ENCODE measurements at regions of chr20 and their contacts with region 1.

Region 1: GRCh38 chr20:61099806-61100205 is 152.3 kb upstream of the CDH4 start:
- DNase-seq: peak in 3 of 10 donors; percentile 14 to 45 (median 21)
- H3K4me3 ChIP-seq: no peak overlapping the region
- H3K27ac ChIP-seq: no peak overlapping the region
- H3K27me3 ChIP-seq: peaks cover 0 to 27% (median 3%) of the 10 kb centered on the region in 45 donors
- CTCF ChIP-seq: no peak

Region 2: DNA sequence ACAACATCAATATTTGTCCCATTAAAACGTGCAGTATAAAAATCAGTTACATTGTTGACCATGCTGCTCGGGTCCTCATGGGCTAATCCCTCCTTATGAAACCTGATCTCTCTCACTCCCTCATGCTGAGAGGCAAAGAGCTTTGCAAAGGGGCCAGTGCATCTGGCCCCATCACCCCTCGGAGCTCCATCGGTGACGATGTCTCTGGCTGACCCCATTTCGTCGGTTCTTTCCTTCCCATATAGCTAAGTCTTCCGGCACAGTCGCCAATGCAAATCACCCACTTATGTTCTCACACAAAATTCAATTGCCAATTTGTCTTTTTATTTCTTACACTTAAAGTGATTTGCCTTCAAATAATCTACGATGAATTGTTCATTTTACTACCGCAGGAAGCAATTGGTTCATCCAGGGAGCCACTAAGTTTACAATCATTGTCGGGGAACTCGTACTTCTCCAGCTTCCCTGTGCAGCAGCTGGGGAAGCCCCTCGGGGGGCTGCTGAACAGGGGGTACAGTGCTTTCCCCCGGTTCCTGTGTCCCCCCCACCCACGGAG is 47.5 kb before region 1 on chr20:
- intact Hi-C with region 1: loop called in 1 of 2 experiments (anchors 5 kb)
- DNase-seq: no peak
- H3K4me3 ChIP-seq: no peak overlapping the region
- H3K27ac ChIP-seq: no peak overlapping the region
- H3K27me3 ChIP-seq: peaks cover 0 to 26% (median 0%) of the 10 kb centered on the region in 45 donors
- CTCF ChIP-seq: no peak

Region 3: DNA sequence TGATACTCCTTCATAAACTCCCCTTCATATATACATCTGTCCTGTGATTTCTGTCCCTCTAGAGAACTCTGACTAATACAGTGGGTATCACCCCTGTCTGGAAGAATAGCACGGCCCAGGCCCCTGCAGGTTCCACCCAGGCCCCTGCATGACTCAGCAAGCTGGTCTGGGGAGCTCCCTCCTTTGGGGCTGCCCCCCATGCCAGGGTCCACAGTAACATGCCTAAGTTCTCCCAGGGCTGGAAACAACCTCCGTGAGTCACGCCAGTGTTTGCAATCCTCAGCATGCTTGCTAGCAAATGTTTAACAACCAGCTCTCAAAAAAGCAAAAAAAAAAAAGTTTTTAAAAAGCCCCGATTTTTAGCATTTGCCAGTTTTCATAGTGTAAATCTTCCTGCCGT is 17.9 kb after region 1 on chr20:
- intact Hi-C with region 1: no loop called
- DNase-seq: no peak
- H3K4me3 ChIP-seq: no peak overlapping the region
- H3K27ac ChIP-seq: no peak overlapping the region
- H3K27me3 ChIP-seq: peaks cover 0 to 36% (median 6%) of the 10 kb centered on the region in 45 donors
- CTCF ChIP-seq: no peak